Dorsolateral prefrontal cortex (tissue), 120 donors: ENCODE measurements at regions of chr10 and their contacts with region 1.

Region 1: GRCh38 chr10:110681023-110681681 is 37.0 kb downstream of the RBM20 start:
- DNase-seq: no peak
- H3K4me3 ChIP-seq: no peak overlapping the region
- H3K27ac ChIP-seq: no peak overlapping the region
- H3K27me3 ChIP-seq: peaks cover 0 to 12% (median 0%) of the 10 kb centered on the region in 45 donors
- CTCF ChIP-seq: peak in 49 of 56 donors; percentile 13 to 68 (median 42)

Region 2: GRCh38 chr10:110610308-110610774 is 70.8 kb before region 1 on chr10:
- intact Hi-C with region 1: loop called in 1 of 2 experiments (anchors 5 kb)
- DNase-seq: peak in 3 of 10 donors; percentile 14 to 49 (median 29)
- H3K4me3 ChIP-seq: no peak overlapping the region
- H3K27ac ChIP-seq: no peak overlapping the region
- H3K27me3 ChIP-seq: no peaks in the 10 kb centered on the region
- CTCF ChIP-seq: peak; percentile 54 to 86 (median 77)